CD8-positive, alpha-beta T cell (primary cell): ENCODE measurements at regions of chr9 and their contacts with region 1.

Region 1: GRCh38 chr9:99184475-99185347 is 37.0 kb downstream of the ALG2 start:
- DNase-seq: peak; percentile 56 to 90 (median 80)
- ATAC-seq: peak; percentile 96
- H3K4me3 ChIP-seq: peak overlapping the region in 1 of 2 experiments; percentile 18
- H3K4me3 Mint-ChIP-seq: peak overlapping the region; percentile 41
- H3K27ac ChIP-seq: no peak overlapping the region
- H3K27ac Mint-ChIP-seq: peak overlapping the region; percentile 29
- H3K4me1 ChIP-seq: peaks cover 6% of the 10 kb centered on the region
- H3K4me1 Mint-ChIP-seq: peaks cover 15% of the 10 kb centered on the region
- H3K27me3 ChIP-seq: no peaks in the 10 kb centered on the region
- H3K27me3 Mint-ChIP-seq: no peaks in the 10 kb centered on the region
- CTCF ChIP-seq: peak; percentile 89

Region 2: DNA sequence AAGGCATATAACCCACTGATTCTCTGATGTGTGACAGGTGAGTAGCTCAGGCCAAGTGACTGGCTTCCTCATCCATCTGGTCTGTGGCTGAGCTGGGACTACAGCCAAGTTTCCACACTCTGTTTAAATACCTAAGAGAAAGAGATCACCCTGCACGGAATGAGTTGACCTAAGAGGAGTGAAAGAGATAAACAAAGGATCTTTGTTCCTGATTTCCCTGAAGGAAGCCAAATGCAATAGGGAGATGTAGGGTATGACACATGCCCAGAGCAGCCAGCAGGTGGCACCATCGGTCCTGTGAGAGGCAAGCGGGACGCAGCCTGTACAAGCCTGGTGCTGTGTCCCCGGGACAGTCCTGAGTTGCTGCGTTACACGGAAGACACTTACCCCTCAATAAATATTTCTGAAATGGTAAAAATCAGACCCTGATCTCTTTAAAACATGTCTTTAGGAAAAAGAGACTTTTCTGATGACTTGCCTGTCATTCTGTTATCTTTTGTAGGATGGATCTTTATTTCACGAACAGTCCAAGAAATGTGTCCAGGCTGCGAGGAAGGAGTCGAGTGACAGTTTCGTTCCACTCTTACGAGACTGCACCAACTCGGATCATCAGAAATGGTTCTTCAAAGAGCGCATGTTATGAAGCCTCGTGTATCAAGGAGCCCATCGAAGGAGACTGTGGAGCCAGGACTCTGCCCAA is 336.1 kb before region 1 on chr9:
- CTCF ChIA-PET with region 1: interaction called, 6 read pairs
- POLR2A ChIA-PET with region 1: no interaction called
- intact Hi-C with region 1: loop called in 1 of 2 experiments (anchors 1 kb)
- DNase-seq: peak; percentile 47 to 83 (median 76)
- ATAC-seq: peak; percentile 90
- H3K4me3 ChIP-seq: no peak overlapping the region
- H3K4me3 Mint-ChIP-seq: no peak overlapping the region
- H3K27ac ChIP-seq: no peak overlapping the region
- H3K27ac Mint-ChIP-seq: no peak overlapping the region
- H3K4me1 ChIP-seq: no peaks in the 10 kb centered on the region
- H3K4me1 Mint-ChIP-seq: peaks cover 3% of the 10 kb centered on the region
- H3K27me3 ChIP-seq: no peaks in the 10 kb centered on the region
- H3K27me3 Mint-ChIP-seq: no peaks in the 10 kb centered on the region
- CTCF ChIP-seq: peak; percentile 95

Region 3: GRCh38 chr9:99150451-99151171 is 34.1 kb before region 1 on chr9:
- CTCF ChIA-PET with region 1: interaction called, 10 read pairs
- POLR2A ChIA-PET with region 1: no interaction called
- intact Hi-C with region 1: no loop called
- DNase-seq: peak in 2 of 9 experiments; percentile 56 to 78
- ATAC-seq: peak; percentile 93
- H3K4me3 ChIP-seq: peak overlapping the region in 1 of 2 experiments; percentile 6
- H3K4me3 Mint-ChIP-seq: peak overlapping the region; percentile 69
- H3K27ac ChIP-seq: peak overlapping the region; percentile 26 to 58
- H3K27ac Mint-ChIP-seq: peak overlapping the region; percentile 86
- H3K4me1 ChIP-seq: peaks cover 29% of the 10 kb centered on the region
- H3K4me1 Mint-ChIP-seq: peaks cover 47% of the 10 kb centered on the region
- H3K27me3 ChIP-seq: no peaks in the 10 kb centered on the region
- H3K27me3 Mint-ChIP-seq: no peaks in the 10 kb centered on the region
- CTCF ChIP-seq: no peak

Region 4: DNA sequence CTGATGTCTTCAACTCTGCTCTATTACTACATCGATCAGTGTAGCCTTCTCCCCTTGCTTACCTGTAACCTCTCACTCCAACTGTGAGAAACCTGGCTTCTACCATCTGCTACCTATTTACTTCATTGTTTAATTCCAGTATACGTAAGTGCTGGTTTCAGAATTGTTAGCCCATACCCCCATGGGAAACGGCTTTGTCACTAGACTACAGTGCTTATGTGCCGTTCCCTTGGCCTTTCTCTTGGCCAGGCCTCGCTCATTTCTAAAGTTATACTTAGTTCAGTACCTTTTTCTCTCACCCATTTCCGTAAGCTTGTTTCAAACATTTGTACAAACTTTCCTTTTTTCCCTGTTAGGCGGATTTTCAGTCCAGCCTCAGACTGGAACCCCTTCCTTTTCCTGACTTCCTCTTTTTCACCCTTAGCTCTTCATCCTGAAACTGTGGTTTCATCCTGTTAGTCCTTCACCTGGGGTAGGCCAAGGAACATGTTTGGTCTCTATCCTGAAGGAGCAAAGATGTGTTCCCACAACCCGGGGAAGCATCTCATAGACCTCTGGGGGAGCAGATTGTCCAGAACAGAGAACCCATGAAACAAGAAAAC is 15.3 kb after region 1 on chr9:
- CTCF ChIA-PET with region 1: interaction called, 49 read pairs
- POLR2A ChIA-PET with region 1: no interaction called
- intact Hi-C with region 1: no loop called
- DNase-seq: no peak
- ATAC-seq: no peak
- H3K4me3 ChIP-seq: no peak overlapping the region
- H3K4me3 Mint-ChIP-seq: no peak overlapping the region
- H3K27ac ChIP-seq: no peak overlapping the region
- H3K27ac Mint-ChIP-seq: no peak overlapping the region
- H3K4me1 ChIP-seq: no peaks in the 10 kb centered on the region
- H3K4me1 Mint-ChIP-seq: no peaks in the 10 kb centered on the region
- H3K27me3 ChIP-seq: no peaks in the 10 kb centered on the region
- H3K27me3 Mint-ChIP-seq: no peaks in the 10 kb centered on the region
- CTCF ChIP-seq: no peak

Region 5: DNA sequence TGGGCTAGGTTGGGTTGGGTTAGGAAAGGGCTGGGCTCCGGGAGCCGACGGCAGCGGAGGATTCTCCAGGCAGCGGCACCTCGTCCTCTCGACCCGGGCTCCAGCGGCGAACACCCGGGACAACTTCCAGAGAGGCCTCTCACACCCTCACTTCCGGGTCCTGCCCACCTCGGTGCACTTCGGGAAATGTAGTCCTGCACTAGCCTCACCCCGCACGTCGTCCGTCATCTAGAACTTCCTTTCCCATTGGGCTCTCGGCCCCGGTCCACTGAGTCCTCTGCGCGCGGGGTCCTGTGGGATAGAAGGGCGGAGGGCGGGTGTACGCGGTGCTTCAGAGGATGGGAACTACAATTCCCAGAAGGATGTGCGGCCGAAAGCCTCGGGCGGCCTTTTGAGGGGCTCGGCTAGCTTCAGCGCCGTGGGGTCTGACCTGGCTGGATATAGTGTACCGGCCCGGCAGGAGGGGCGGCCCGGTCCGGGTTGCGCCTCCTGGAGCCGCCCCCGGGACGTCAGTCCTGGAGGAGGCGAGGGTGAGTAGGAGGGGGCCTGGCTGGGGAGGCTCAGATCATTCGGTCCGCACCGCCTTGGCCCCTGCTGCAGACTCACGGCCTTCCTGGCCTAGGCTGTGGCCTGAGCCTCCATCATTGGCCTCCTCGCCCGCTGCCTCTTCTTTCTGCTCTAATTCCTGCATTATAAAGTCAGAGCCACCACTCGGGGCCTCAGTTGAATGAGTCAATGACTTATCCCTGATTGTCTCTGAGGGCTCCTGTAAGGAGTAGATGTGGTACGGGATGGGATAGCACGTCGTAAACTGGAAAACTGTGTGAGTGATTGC is 914.4 kb after region 1 on chr9 and contains the starts of genes ERP44 and INVS:
- CTCF ChIA-PET with region 1: no interaction called
- POLR2A ChIA-PET with region 1: no interaction called
- intact Hi-C with region 1: no loop called
- DNase-seq: peak; percentile 93 to 99 (median 96)
- ATAC-seq: peak; percentile 99
- H3K4me3 ChIP-seq: peak within 1 kb of the TSS; percentile 95 to 98
- H3K4me3 Mint-ChIP-seq: peak within 1 kb of the TSS; percentile 99
- H3K27ac ChIP-seq: peak within 1 kb of the TSS; percentile 72 to 85
- H3K27ac Mint-ChIP-seq: peak within 1 kb of the TSS; percentile 97
- H3K4me1 ChIP-seq: peaks cover 31% of the 10 kb centered on the region
- H3K4me1 Mint-ChIP-seq: peaks cover 44% of the 10 kb centered on the region
- H3K27me3 ChIP-seq: no peaks in the 10 kb centered on the region
- H3K27me3 Mint-ChIP-seq: no peaks in the 10 kb centered on the region
- CTCF ChIP-seq: no peak
- total RNA-seq, gene ERP44: 7.6 to 8.5 TPM
- total RNA-seq, gene INVS: 12.5 to 13.2 TPM

Region 6: DNA sequence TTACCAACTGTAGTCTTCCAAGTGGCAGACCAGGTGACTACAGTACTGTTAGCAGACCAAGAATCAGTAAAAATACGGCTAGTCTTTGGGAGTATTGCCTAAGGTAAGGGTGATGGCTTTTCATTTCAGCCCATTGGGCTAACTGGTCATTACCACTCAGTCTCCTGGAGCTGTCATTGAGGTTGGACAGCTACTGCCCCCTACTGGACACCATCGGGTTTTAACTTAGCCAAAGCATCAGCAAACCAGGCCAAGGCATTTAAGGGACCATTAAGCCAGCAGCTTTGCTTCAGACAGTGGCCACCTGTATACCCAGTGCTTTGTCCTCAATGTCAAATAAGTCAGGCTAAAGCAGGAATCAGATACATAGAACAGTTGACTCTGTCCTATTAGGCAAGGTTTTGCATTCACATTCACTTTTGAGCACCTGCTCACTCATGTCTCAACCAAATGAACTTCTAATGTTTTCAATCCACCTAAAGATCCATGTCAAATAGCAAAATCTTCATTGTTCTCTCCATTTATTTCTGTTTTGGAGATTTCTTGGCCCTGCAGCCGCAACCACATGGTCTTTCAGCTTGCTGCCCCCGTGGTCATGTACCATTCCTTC is 1031.6 kb after region 1 on chr9:
- CTCF ChIA-PET with region 1: no interaction called
- POLR2A ChIA-PET with region 1: no interaction called
- intact Hi-C with region 1: loop called in 1 of 2 experiments (anchors 10 kb)
- DNase-seq: peak; percentile 27 to 75 (median 56)
- ATAC-seq: peak; percentile 51
- H3K4me3 ChIP-seq: no peak overlapping the region
- H3K4me3 Mint-ChIP-seq: no peak overlapping the region
- H3K27ac ChIP-seq: no peak overlapping the region
- H3K27ac Mint-ChIP-seq: no peak overlapping the region
- H3K4me1 ChIP-seq: no peaks in the 10 kb centered on the region
- H3K4me1 Mint-ChIP-seq: no peaks in the 10 kb centered on the region
- H3K27me3 ChIP-seq: no peaks in the 10 kb centered on the region
- H3K27me3 Mint-ChIP-seq: no peaks in the 10 kb centered on the region
- CTCF ChIP-seq: peak; percentile 66

Region 7: GRCh38 chr9:100598641-100599145 is 1414.0 kb after region 1 on chr9:
- CTCF ChIA-PET with region 1: interaction called, 3 read pairs
- POLR2A ChIA-PET with region 1: no interaction called
- intact Hi-C with region 1: loop called in 1 of 2 experiments (anchors 10 kb)
- DNase-seq: peak; percentile 60 to 90 (median 79)
- ATAC-seq: peak; percentile 86
- H3K4me3 ChIP-seq: peak overlapping the region; percentile 54 to 59
- H3K4me3 Mint-ChIP-seq: peak overlapping the region; percentile 80
- H3K27ac ChIP-seq: peak overlapping the region in 1 of 2 experiments; percentile 49
- H3K27ac Mint-ChIP-seq: peak overlapping the region; percentile 73
- H3K4me1 ChIP-seq: peaks cover 7% of the 10 kb centered on the region
- H3K4me1 Mint-ChIP-seq: peaks cover 24% of the 10 kb centered on the region
- H3K27me3 ChIP-seq: no peaks in the 10 kb centered on the region
- H3K27me3 Mint-ChIP-seq: no peaks in the 10 kb centered on the region
- CTCF ChIP-seq: no peak